Dorsolateral prefrontal cortex (tissue), 120 donors: ENCODE measurements at regions of chr4 and their contacts with region 1.

Region 1: DNA sequence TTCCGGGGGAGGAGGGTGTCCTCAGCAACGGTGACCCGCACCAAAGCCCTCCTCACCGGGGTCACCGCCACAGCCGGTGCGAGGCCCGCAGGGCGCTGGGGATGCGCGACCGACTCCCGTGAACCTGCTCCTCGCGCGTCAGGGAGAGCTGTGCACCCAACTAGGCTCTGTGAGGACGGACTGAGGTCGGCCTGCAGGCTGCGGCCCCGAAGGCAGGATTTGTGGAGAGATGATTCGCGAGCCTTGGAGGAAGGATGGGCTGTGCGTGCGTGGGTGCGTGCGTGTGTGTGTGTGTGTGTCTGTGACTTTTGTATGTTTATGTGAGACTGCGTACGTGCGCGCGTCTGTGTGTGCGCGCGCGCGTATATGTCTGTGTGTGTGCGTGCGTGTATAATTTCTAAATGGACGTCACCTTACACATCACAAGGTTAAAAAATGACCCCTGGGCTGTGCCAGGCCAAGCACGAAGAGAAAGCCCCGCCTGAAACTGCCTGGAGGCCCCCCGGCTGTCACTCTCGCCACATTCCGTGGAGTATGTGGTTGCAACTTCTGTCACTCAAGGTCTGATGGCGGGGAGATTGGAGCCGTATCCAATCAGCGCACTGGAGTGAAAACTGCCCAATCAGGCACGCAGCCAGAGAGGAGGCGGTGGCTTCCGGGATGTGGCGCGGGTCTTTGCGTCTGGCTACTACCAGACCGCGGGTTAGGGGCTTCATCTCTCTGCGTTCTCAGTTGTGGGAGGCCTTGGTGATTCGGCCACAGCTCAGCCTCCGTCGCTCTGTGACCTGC is at the start of gene ZNF141:
- DNase-seq: peak; percentile 92 to 98 (median 97)
- H3K4me3 ChIP-seq: peak within 1 kb of the TSS; percentile 73 to 99 (median 93)
- H3K27ac ChIP-seq: peak within 1 kb of the TSS; percentile 45 to 98 (median 92)
- H3K27me3 ChIP-seq: no peaks in the 10 kb centered on the region
- CTCF ChIP-seq: peak in 8 of 56 donors; percentile 6 to 40 (median 13)
- total RNA-seq, gene ZNF141: 18.8 to 43.1 (median 31.5) TPM

Region 2: DNA sequence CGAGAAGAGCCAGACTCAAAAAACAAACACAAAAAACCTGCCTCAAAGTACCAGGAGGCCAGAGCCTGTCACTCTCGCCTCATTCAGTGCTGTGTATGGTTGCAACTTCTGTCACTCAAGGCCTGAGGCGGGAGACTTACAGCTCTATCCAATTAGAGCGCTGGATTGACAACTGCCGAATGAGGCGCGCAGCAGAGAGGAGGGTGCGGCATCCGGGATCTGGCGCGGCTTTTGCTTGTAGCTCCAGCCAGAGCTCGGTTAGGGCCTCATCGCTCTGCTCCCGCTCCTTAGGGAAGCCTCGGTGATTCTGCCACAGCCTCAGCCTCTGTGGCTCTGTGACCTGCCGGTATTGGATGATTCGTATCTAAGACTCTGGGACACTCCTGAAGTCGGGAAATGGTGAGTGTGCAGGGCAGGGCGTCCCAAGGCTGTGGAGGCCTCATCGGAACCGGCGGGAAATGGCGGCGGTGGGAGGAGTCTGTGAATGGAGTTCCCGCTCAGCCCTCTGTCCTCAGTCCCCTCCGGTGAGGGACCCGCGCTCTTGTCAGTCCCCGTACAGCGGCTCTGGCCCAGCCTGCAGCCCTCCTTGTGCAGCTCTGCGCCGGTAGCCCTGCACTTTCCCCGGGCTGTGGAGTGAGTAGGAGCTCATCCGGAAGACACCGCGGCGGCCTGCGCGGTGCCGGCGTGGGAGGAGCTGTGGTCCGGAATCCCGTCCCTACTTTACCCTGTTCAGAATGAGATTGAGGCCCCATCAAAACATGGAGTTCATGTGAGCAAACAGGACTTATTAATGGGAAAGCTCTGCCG is 212.9 kb before region 1 on chr4 and contains the start of gene ZNF718:
- intact Hi-C with region 1: loop called in 1 of 2 experiments (anchors 5 kb)
- DNase-seq: peak; percentile 87 to 98 (median 96)
- H3K4me3 ChIP-seq: peak within 1 kb of the TSS; percentile 57 to 99 (median 90)
- H3K27ac ChIP-seq: peak within 1 kb of the TSS; percentile 51 to 96 (median 87)
- H3K27me3 ChIP-seq: no peaks in the 10 kb centered on the region
- CTCF ChIP-seq: peak in 9 of 56 donors; percentile 9 to 41 (median 17)
- total RNA-seq, gene ZNF718: 10.3 to 33.8 (median 17.1) TPM

Region 3: GRCh38 chr4:242121-242848 is 95.1 kb before region 1 on chr4:
- intact Hi-C with region 1: loop called in 1 of 2 experiments (anchors 2 kb)
- DNase-seq: peak; percentile 20 to 73 (median 48)
- H3K4me3 ChIP-seq: peak overlapping the region; percentile 25 to 75 (median 54)
- H3K27ac ChIP-seq: peak overlapping the region in 40 of 59 donors; percentile 2 to 82 (median 46)
- H3K27me3 ChIP-seq: no peaks in the 10 kb centered on the region
- CTCF ChIP-seq: peak; percentile 73 to 95 (median 89)

Region 4: GRCh38 chr4:473570-474457 is 136.5 kb after region 1 on chr4:
- intact Hi-C with region 1: loop called (anchors 10 kb)
- DNase-seq: peak; percentile 94 to 98 (median 97)
- H3K4me3 ChIP-seq: peak overlapping the region; percentile 66 to 100 (median 94)
- H3K27ac ChIP-seq: peak overlapping the region in 58 of 59 donors; percentile 51 to 97 (median 87)
- H3K27me3 ChIP-seq: no peaks in the 10 kb centered on the region
- CTCF ChIP-seq: peak in 12 of 56 donors; percentile 9 to 47 (median 19)